CD8-positive, alpha-beta T cell (primary cell): ENCODE measurements at regions of chr17 and their contacts with region 1.

Region 1: GRCh38 chr17:31313982-31314784 is at the start of gene EVI2B:
- DNase-seq: peak in 3 of 9 experiments; percentile 29 to 75 (median 59)
- ATAC-seq: peak; percentile 44
- H3K4me3 ChIP-seq: peak within 1 kb of the TSS; percentile 59 to 67
- H3K4me3 Mint-ChIP-seq: peak within 1 kb of the TSS; percentile 82
- H3K27ac ChIP-seq: peak within 1 kb of the TSS; percentile 50 to 89
- H3K27ac Mint-ChIP-seq: peak within 1 kb of the TSS; percentile 90
- H3K4me1 ChIP-seq: peaks cover 40% of the 10 kb centered on the region
- H3K4me1 Mint-ChIP-seq: peaks cover 52% of the 10 kb centered on the region
- H3K27me3 ChIP-seq: no peaks in the 10 kb centered on the region
- H3K27me3 Mint-ChIP-seq: no peaks in the 10 kb centered on the region
- CTCF ChIP-seq: no peak
- total RNA-seq, gene EVI2B: 77.5 to 82.0 TPM

Region 2: GRCh38 chr17:30981531-30982519 is 332.4 kb before region 1 on chr17:
- CTCF ChIA-PET with region 1: no interaction called
- POLR2A ChIA-PET with region 1: no interaction called
- intact Hi-C with region 1: no loop called
- DNase-seq: no peak
- ATAC-seq: no peak
- H3K4me3 ChIP-seq: no peak overlapping the region
- H3K4me3 Mint-ChIP-seq: no peak overlapping the region
- H3K27ac ChIP-seq: no peak overlapping the region
- H3K27ac Mint-ChIP-seq: no peak overlapping the region
- H3K4me1 ChIP-seq: no peaks in the 10 kb centered on the region
- H3K4me1 Mint-ChIP-seq: no peaks in the 10 kb centered on the region
- H3K27me3 ChIP-seq: no peaks in the 10 kb centered on the region
- H3K27me3 Mint-ChIP-seq: no peaks in the 10 kb centered on the region
- CTCF ChIP-seq: no peak

Region 3: DNA sequence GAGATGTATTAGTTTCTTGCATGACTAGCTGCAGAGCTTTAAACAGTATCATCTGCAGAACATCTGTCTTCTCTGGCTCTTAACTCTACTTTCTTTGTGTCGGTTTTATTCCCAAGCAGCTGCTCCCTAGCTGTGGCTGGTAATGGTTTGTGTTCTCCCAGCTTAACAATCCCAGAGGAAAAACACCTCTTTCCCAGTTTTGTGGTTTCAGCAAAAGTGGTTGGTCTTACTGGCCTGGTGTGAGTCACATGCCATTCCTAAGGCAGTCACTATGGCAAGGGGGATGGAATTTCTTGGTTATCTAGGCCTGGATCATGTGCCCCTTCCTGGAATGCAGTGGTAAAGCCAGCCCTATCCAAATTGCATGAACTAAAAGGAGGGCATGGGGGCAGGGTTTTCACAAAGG is 44.6 kb before region 1 on chr17:
- CTCF ChIA-PET with region 1: no interaction called
- POLR2A ChIA-PET with region 1: no interaction called
- intact Hi-C with region 1: loop called in 1 of 2 experiments (anchors 5 kb)
- DNase-seq: no peak
- ATAC-seq: no peak
- H3K4me3 ChIP-seq: no peak overlapping the region
- H3K4me3 Mint-ChIP-seq: no peak overlapping the region
- H3K27ac ChIP-seq: no peak overlapping the region
- H3K27ac Mint-ChIP-seq: no peak overlapping the region
- H3K4me1 ChIP-seq: no peaks in the 10 kb centered on the region
- H3K4me1 Mint-ChIP-seq: no peaks in the 10 kb centered on the region
- H3K27me3 ChIP-seq: no peaks in the 10 kb centered on the region
- H3K27me3 Mint-ChIP-seq: no peaks in the 10 kb centered on the region
- CTCF ChIP-seq: no peak

Region 4: GRCh38 chr17:31297090-31297489 is 17.1 kb before region 1 on chr17 and contains the start of gene OMG:
- CTCF ChIA-PET with region 1: no interaction called
- POLR2A ChIA-PET with region 1: interaction called, 4 read pairs
- intact Hi-C with region 1: loop called in 1 of 2 experiments (anchors 1 kb)
- DNase-seq: no peak
- ATAC-seq: no peak
- H3K4me3 ChIP-seq: no peak within 1 kb of the TSS
- H3K4me3 Mint-ChIP-seq: no peak within 1 kb of the TSS
- H3K27ac ChIP-seq: no peak within 1 kb of the TSS
- H3K27ac Mint-ChIP-seq: no peak within 1 kb of the TSS
- H3K4me1 ChIP-seq: peaks cover 11% of the 10 kb centered on the region
- H3K4me1 Mint-ChIP-seq: peaks cover 30% of the 10 kb centered on the region
- H3K27me3 ChIP-seq: no peaks in the 10 kb centered on the region
- H3K27me3 Mint-ChIP-seq: no peaks in the 10 kb centered on the region
- CTCF ChIP-seq: no peak
- total RNA-seq, gene OMG: 0.41 to 0.44 TPM

Region 5: DNA sequence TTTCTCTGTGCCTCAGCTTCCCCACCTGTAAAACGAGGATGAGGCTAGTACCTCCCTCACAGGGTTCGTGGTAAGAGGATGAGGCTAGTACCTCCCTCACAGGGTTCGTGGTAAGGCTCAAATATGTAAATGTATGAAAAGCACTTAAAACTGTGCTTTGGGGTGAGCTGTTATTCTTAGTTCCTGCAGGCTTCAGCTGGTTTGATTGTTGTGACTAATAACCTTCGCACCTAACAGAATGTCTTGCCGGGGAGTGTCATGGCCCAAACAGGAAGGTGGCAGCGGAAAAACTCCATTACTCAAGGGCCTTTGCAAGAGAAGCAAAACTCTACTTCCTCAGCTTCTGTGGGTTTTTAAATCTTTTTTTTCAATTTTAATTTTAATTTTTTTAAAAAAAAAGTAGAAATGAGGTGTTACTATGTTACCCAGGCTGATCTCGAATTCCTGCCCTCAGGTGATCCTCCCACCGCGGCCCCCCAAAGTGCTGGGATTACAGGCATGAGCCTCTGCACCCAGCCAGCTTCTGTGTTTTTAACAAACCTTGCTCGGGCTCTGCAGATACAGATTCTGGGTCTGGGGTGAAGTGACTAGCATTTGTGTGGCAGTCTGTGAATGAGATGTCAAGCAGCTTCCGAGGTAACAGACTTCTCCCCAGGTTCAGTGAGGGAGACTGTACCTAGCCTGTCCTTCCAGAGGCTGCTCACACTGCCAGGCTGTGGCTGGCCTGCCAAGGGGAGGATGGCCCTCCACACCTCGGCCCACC is 180.3 kb after region 1 on chr17:
- CTCF ChIA-PET with region 1: no interaction called
- POLR2A ChIA-PET with region 1: interaction called, 3 read pairs
- intact Hi-C with region 1: loop called (anchors 5 kb)
- DNase-seq: peak in 8 of 9 experiments; percentile 53 to 91 (median 72)
- ATAC-seq: peak; percentile 81
- H3K4me3 ChIP-seq: peak overlapping the region in 1 of 2 experiments; percentile 20
- H3K4me3 Mint-ChIP-seq: peak overlapping the region; percentile 76
- H3K27ac ChIP-seq: peak overlapping the region; percentile 76 to 89
- H3K27ac Mint-ChIP-seq: peak overlapping the region; percentile 97
- H3K4me1 ChIP-seq: peaks cover 97% of the 10 kb centered on the region
- H3K4me1 Mint-ChIP-seq: peaks cover 97% of the 10 kb centered on the region
- H3K27me3 ChIP-seq: no peaks in the 10 kb centered on the region
- H3K27me3 Mint-ChIP-seq: no peaks in the 10 kb centered on the region
- CTCF ChIP-seq: no peak

Region 6: DNA sequence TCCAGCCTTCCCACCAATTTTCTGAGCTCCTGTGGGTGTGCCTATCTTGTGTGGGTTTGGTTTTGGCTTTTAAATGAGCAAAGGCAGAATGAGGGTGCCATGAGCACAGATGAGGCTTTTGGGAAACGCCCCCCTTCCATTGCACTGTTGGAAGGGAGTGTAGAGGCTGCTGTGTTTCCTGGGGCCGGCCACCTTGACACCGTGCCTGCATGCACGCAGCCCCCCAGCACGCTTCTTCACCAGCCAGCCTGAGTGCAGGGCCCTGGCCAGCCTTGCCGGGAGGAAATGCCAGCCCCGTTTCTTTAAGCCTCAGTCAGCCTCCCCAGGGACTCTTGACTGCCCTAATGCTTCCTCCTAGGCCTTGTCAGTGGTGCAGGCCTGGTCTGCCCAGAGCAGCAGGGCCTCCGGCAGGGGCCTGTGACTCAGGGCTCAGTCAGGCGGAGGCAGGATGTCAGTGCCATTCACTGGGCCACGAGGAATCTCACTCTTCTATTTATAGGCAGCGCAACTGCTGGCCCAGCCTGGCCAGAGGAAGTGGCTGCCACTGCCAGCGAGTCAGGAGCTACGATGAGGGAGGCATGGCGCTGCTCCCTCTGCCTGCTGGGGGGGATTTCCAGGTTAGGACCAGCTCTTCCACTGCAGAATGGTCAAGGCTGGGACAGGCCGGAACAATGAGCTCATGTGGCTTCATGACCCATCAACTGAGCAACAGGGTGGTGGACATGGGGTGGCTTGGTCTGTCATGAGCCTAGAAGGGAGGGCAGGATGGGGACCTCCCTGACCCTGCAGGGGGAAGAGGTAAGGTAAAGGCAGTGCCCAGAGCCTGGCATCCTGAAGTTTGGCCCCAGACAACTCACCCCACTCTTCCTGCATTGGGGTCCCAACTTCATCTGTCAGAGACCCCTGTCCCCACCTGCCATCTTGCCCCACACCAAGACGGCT is 282.5 kb after region 1 on chr17:
- CTCF ChIA-PET with region 1: no interaction called
- POLR2A ChIA-PET with region 1: no interaction called
- intact Hi-C with region 1: no loop called
- DNase-seq: peak in 1 of 9 experiments; percentile 38
- ATAC-seq: peak; percentile 26
- H3K4me3 ChIP-seq: no peak overlapping the region
- H3K4me3 Mint-ChIP-seq: no peak overlapping the region
- H3K27ac ChIP-seq: no peak overlapping the region
- H3K27ac Mint-ChIP-seq: no peak overlapping the region
- H3K4me1 ChIP-seq: no peaks in the 10 kb centered on the region
- H3K4me1 Mint-ChIP-seq: no peaks in the 10 kb centered on the region
- H3K27me3 ChIP-seq: no peaks in the 10 kb centered on the region
- H3K27me3 Mint-ChIP-seq: no peaks in the 10 kb centered on the region
- CTCF ChIP-seq: no peak